HepG2 (cell line): ENCODE measurements at regions of chr11 and their contacts with region 1.

Region 1: GRCh38 chr11:57974848-57975601 is 48.7 kb upstream of the OR9Q1 start:
- DNase-seq: no peak
- ATAC-seq: no peak
- H3K4me3 ChIP-seq: no peak overlapping the region
- H3K27ac ChIP-seq: no peak overlapping the region
- H3K4me1 ChIP-seq: peaks cover 86% of the 10 kb centered on the region
- H3K27me3 ChIP-seq: no peaks in the 10 kb centered on the region
- CTCF ChIP-seq: no peak
- EP300 ChIP-seq: no peak
- POLR2A ChIP-seq: no peak
- RAD21 ChIP-seq: no peak

Region 2: DNA sequence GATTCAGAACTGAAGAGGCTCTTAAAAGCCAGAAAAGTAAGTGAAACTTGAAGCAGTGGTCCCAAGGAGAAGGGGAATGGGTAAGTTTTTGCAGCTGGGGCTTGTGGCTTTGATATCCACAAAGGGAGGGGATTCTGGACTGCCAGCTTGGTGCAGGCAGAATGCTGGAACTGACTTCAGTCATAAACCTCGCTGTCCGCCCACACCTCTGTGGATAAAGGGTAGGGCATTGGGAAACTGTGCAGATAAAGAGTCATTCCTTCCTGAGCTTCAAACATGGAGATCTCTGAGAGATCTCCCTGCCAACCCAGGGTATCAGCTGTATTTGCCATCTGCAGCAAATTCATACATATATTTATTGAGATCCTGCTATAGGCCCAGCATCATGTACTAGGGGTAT is 75.6 kb before region 1 on chr11:
- CTCF ChIA-PET with region 1: no interaction called
- POLR2A ChIA-PET with region 1: no interaction called
- in situ Hi-C with region 1: no loop called
- intact Hi-C with region 1: no loop called
- DNase-seq: no peak
- ATAC-seq: no peak
- H3K4me3 ChIP-seq: no peak overlapping the region
- H3K27ac ChIP-seq: no peak overlapping the region
- H3K4me1 ChIP-seq: no peaks in the 10 kb centered on the region; the same call in 1 of the 2 replicates
- H3K27me3 ChIP-seq: peaks cover 0 to 8% of the 10 kb centered on the region in 2 experiments; a peak in 2 of 5 replicates
- CTCF ChIP-seq: no peak
- EP300 ChIP-seq: no peak
- POLR2A ChIP-seq: no peak
- RAD21 ChIP-seq: no peak

Region 3: DNA sequence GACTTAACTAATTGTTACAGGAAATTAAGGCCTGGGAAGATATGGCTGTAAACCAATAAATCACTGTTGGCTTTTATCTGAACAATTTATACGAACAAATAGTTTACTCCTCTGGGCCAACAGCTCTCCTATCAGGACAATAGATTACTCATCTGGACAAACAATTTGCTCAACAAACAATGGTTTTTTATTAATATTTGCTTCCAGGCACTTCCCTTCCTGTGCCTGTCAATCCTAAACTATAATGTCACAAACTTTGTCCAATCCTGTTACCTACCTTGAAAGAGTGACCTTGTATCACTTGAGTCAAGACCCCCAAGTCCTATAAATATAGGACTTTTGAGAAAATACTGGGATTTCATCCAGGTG is 39.0 kb before region 1 on chr11:
- CTCF ChIA-PET with region 1: no interaction called
- POLR2A ChIA-PET with region 1: interaction called, 4 read pairs
- in situ Hi-C with region 1: no loop called
- intact Hi-C with region 1: loop called (anchors 5 kb)
- DNase-seq: peak; percentile 66
- ATAC-seq: peak; percentile 85
- H3K4me3 ChIP-seq: no peak overlapping the region
- H3K27ac ChIP-seq: peak overlapping the region; percentile 31
- H3K4me1 ChIP-seq: peaks cover 60% of the 10 kb centered on the region
- H3K27me3 ChIP-seq: no peaks in the 10 kb centered on the region; a peak in 1 of 5 replicates
- CTCF ChIP-seq: no peak
- EP300 ChIP-seq: peak in 1 of 2 experiments; percentile 60; a peak in 1 of 4 replicates
- POLR2A ChIP-seq: no peak
- RAD21 ChIP-seq: no peak

Region 4: DNA sequence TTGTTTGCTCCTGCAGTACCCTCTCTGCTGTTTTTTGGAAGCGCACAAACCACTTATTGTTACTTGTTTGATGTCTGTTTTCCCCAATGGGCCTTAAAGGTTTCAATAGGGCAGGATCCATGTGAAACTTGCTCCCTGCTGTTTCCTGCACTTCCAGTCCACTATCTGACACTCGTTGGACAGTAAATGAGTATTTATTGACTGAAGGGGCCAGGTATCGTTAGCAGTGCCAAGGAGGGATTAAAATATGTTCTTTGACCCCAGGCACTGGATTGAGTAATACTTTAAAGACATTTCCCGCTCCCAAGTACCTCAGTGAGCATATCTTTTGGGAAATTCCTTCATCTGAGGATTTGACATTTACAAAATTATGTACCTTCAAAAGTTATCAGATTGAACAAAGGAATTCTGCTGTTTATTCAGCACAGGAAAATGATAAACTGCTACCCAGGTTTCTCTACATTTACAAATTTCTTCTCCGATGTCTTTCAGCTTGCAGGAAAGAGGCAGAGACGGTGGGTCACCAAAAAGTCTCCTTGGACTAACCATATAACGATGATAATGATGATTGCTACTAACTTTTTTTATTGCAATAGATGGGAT is 190.6 kb after region 1 on chr11:
- CTCF ChIA-PET with region 1: no interaction called
- POLR2A ChIA-PET with region 1: interaction called, 3 read pairs
- in situ Hi-C with region 1: no loop called
- intact Hi-C with region 1: loop called (anchors 1 kb)
- DNase-seq: peak; percentile 93
- ATAC-seq: peak; percentile 98
- H3K4me3 ChIP-seq: peak overlapping the region in 1 of 3 experiments; percentile 9; a peak in 2 of 6 replicates
- H3K27ac ChIP-seq: peak overlapping the region; percentile 73
- H3K4me1 ChIP-seq: peaks cover 51% of the 10 kb centered on the region
- H3K27me3 ChIP-seq: no peaks in the 10 kb centered on the region
- CTCF ChIP-seq: no peak
- EP300 ChIP-seq: peak in 1 of 2 experiments; percentile 97; a peak in 2 of 4 replicates
- POLR2A ChIP-seq: no peak
- RAD21 ChIP-seq: no peak

Region 5: GRCh38 chr11:58186938-58187337 is 211.9 kb after region 1 on chr11:
- CTCF ChIA-PET with region 1: no interaction called
- POLR2A ChIA-PET with region 1: no interaction called
- in situ Hi-C with region 1: no loop called
- intact Hi-C with region 1: no loop called
- DNase-seq: no peak
- ATAC-seq: no peak
- H3K4me3 ChIP-seq: no peak overlapping the region
- H3K27ac ChIP-seq: no peak overlapping the region
- H3K4me1 ChIP-seq: peaks cover 19% of the 10 kb centered on the region
- H3K27me3 ChIP-seq: peaks cover 0 to 1% of the 10 kb centered on the region in 2 experiments; a peak in 1 of 5 replicates
- CTCF ChIP-seq: no peak
- EP300 ChIP-seq: no peak
- POLR2A ChIP-seq: no peak
- RAD21 ChIP-seq: no peak